Naive thymus-derived CD4-positive, alpha-beta T cell (primary cell): ENCODE measurements at regions of chr14 and their contacts with region 1.

Region 1: DNA sequence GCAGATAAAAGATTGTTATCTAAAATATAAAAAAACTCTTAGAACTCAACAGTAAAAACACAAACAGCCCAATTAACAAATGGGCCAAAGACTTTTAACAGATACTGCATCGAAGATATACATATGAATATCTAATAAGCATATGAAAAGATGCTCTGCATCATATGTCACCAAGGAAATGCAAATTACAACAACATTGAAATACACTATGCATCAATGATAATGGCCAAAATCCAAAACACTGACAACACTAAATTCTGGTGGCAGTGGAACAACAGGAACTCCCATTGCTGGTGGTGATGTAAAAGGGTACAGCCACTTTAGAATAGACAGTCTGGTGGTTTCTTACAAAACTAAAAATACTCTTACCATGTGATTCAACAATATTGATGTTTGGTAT is 40.8 kb downstream of the KLHDC2 start:
- DNase-seq: no peak
- ATAC-seq: no peak
- H3K4me3 ChIP-seq: no peak overlapping the region
- H3K4me3 Mint-ChIP-seq: no peak overlapping the region
- H3K27ac ChIP-seq: no peak overlapping the region
- H3K27ac Mint-ChIP-seq: peak overlapping the region in 1 of 9 donors; percentile 38
- H3K4me1 ChIP-seq: no peaks in the 10 kb centered on the region
- H3K4me1 Mint-ChIP-seq: peaks cover 0 to 14% (median 6%) of the 10 kb centered on the region in 7 donors
- H3K27me3 ChIP-seq: no peaks in the 10 kb centered on the region
- H3K27me3 Mint-ChIP-seq: no peaks in the 10 kb centered on the region

Region 2: DNA sequence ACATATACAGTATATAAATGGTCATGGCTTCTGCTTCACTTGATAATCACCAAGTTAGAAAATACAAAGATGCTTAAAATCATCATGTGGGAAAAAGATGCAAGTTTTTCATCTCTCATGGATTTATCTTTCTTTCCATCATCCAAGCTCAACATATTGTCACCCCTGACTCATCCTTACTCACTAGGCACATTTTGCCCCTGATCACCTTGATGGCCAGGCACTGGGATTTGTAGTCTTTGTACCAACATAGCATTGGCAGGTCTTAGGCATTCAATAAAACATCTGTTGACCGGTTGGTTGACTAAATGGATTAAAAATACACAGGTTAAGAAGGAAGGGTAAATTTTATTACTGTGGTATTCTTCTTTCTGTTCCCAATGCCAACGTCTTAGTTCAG is 12.8 kb before region 1 on chr14:
- CTCF ChIA-PET with region 1: no interaction called
- POLR2A ChIA-PET with region 1: interaction called, 3 read pairs
- intact Hi-C with region 1: loop called in 1 of 2 experiments (anchors 2 kb)
- DNase-seq: no peak
- ATAC-seq: no peak
- H3K4me3 ChIP-seq: no peak overlapping the region
- H3K4me3 Mint-ChIP-seq: no peak overlapping the region
- H3K27ac ChIP-seq: no peak overlapping the region
- H3K27ac Mint-ChIP-seq: peak overlapping the region in 6 of 9 donors; percentile 2 to 71 (median 58)
- H3K4me1 ChIP-seq: no peaks in the 10 kb centered on the region
- H3K4me1 Mint-ChIP-seq: peaks cover 0 to 3% (median 0%) of the 10 kb centered on the region in 7 donors
- H3K27me3 ChIP-seq: no peaks in the 10 kb centered on the region
- H3K27me3 Mint-ChIP-seq: no peaks in the 10 kb centered on the region